ENCODE measurements at regions of chr15 and their contacts with region 1.

Region 1: DNA sequence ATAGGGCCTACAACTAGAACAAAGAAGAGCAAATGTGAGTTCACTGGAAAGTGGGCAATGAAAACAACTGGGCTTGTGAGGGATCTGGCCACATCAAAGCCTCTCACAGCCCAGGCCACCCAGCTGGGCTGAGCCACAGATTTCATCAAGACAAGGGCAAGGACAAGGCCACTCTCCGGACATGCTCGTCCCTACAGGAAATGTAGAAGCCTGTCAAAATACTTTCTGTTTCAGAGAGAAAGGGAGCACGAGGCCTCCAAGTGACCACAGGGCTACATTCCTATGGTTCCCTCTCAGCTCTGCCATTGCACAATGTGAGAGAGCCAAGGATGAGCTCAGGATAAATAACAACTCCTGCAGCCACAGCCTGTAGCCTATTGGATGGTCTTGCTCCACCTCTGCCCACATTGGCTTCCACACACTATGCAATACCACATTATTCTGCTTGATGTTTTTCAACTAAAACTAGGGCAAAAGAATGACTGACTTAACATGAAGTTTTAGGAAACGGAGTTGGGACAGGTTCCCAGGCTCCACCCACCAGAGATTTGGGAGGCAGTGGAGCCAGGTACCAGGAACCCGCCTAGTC is 12.1 kb downstream of the TBC1D2B start:
- DNase-seq: no peak
- H3K4me3 Mint-ChIP-seq: no peak overlapping the region
- H3K27ac Mint-ChIP-seq: peak overlapping the region; percentile 81
- H3K4me1 Mint-ChIP-seq: peaks cover 8% of the 10 kb centered on the region
- H3K27me3 Mint-ChIP-seq: no peaks in the 10 kb centered on the region

Region 2: DNA sequence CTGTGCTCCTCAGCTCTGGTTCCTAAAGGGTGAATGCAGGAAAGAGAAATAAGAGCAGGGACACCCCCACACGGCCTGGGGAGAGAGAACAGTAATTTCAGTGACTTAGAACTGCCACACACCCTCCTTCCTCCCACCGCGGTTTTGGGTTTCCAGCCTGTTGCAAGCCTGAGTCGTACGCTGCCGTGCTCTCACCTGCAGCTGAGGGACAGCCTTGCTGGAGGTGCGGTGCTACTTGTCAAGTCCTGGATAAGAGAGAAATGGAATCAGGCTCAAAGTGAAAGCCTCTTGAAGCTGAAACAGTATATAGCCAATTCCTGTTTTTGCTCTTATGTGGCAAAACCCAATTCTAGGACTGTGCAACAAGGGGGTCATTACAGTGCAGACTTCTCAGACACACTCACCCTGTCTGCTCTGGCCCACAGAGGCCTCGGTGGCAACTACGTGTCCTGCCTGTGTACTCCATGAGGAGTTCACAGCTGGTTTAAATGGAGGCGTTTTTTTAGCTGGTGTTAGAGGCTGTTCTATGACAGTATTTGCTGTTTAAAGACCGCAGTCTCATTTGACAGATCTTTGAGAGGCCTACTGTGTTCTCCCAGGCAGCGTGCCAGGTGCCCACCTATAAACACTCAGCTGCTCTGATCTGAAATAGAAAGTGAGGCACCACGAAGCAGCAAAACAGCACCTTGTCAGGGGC is 30.7 kb before region 1 on chr15:
- intact Hi-C with region 1: loop called (anchors 2 kb)
- DNase-seq: peak; percentile 70
- H3K4me3 Mint-ChIP-seq: peak overlapping the region; percentile 57
- H3K27ac Mint-ChIP-seq: peak overlapping the region; percentile 81
- H3K4me1 Mint-ChIP-seq: peaks cover 76% of the 10 kb centered on the region
- H3K27me3 Mint-ChIP-seq: no peaks in the 10 kb centered on the region

Region 3: DNA sequence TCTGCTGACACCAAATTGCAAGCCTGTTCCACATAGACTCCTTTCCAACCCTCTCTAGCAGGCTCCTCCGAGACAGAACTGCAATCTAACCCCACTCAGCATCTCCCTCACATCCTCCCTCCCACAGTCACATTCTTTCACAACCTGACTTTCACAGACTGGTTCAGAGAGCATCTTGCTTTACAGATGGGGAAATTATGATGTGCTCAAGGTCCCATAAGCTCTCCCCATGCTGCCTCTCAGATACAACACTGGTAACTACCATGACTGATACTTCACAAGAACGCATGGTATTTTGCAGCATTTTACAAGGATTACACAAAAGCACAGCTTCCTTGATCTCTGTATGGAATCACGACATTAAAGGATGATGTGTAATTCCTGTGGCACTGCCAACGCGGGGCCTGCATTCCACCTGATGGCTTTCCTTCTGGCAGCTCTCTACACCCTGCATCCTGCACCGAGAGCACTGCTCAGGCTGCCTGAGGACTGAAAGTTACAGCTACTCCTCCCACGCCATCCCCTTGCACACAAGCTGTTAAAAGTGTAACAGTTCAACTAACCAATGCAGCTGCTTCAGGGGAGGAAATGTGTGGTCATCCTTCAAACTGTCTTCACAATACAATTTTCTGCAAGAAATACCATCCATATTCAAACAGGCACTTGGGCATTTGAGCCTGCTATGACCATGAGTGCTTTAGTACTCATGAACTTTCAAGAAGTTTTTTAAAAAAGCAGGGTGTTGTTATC is 15.5 kb before region 1 on chr15:
- intact Hi-C with region 1: loop called (anchors 1 kb)
- DNase-seq: peak; percentile 57
- H3K4me3 Mint-ChIP-seq: peak overlapping the region; percentile 72
- H3K27ac Mint-ChIP-seq: peak overlapping the region; percentile 98
- H3K4me1 Mint-ChIP-seq: peaks cover 93% of the 10 kb centered on the region
- H3K27me3 Mint-ChIP-seq: no peaks in the 10 kb centered on the region

Region 4: DNA sequence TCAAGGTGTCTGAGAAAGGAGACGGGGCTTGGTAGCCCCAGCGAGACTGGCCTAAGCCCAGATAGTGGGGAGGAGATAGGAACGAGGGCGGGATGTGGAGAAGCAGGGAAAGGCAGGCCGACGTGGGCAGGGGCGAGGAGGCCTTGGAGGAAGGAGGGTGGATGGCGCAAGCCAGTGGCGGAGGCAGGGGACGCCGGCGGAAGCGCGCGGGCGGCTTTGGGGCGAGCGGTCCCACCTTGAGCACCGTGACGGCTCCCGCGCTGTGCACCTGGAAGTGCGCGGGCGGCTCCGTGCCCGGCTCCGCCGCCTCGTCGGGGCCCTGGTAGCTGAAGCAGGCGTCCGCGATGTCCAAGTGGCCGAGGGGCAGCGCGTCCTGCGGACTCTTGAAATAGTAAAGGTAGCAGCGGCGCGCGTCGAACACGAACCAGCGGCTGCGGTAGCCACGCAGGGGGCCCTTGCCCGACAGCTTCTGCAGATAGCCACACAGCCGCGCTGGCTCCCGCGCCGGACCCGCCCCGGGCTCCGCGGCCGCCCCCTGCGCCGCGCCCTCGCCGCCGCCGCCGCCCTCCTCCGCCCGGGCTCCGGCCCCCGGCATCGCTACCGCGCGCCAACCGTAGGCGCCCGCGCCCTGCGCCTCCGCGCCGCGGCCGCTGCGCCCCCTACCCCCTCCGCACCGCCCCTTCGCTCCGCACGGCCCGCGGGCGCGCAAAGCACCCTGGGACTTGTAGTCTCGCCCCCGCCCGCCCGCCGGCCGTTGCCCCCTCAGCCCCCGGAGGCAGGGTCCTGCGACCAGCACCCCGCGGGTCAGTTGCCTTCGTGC is 11.9 kb after region 1 on chr15 and contains the start of gene TBC1D2B:
- intact Hi-C with region 1: loop called (anchors 1 kb)
- DNase-seq: peak; percentile 63
- H3K4me3 Mint-ChIP-seq: peak within 1 kb of the TSS; percentile 97
- H3K27ac Mint-ChIP-seq: peak within 1 kb of the TSS; percentile 89
- H3K4me1 Mint-ChIP-seq: peaks cover 40% of the 10 kb centered on the region
- H3K27me3 Mint-ChIP-seq: no peaks in the 10 kb centered on the region
- total RNA-seq, gene TBC1D2B: 55.0 and 63.5 TPM in 2 replicates

Measured in activated T-helper 2 cell treated with anti-CD3 and anti-CD28 coated beads, Interferon-gamma antibody, Interleukin-2, Interleukin-4, amounts not matched to agents 10 μg/mL and 5 μg/mL and 100 μg/mL, durations not matched to agents 14 hours and 24 hours and 36 hours (primary cell).